Posterior vena cava (tissue), 2 donors: ENCODE measurements at regions of chr20 and their contacts with region 1.

Region 1: GRCh38 chr20:21583486-21584168 is 69.8 kb upstream of the NKX2-2 start:
- DNase-seq: no peak

Region 2: GRCh38 chr20:21529863-21530262 is 53.8 kb before region 1 on chr20:
- intact Hi-C with region 1: loop called in 1 of 2 experiments (anchors 10 kb)
- DNase-seq: no peak